CD4-positive, alpha-beta memory T cell (primary cell): ENCODE measurements at regions of chr2 and their contacts with region 1.

Region 1: DNA sequence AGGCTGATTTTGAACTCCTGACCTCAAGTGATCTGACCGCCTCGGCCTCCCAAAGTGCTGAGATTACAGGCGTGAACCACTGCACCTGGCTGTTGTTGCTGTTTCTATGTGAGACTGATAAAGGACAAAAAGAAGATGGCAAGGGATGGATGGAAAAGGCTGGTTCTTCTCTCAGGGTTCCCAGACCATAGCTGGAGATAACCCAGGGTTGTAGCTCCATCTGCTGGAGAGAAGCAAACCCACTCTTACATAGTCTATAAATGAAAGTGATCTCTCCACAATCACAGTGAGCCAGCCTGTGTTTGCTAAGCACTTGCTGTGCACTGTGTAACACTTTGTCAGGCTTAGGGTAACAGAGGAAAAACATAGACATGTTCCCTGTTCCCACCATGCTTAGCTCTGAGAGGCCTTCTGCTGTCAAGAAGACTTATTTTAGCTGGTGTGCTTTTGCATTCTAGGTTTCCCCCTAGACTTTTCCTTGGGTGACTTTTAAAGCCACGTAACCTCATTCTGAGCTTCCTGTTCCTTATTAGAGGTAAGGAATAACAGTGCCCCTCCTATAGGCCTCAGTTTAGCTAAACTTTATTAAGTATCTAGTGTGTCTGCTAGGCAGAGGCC is 49.7 kb downstream of the LIMS1 start:
- DNase-seq: peak; percentile 52 to 59 (median 55)
- H3K4me3 ChIP-seq: no peak overlapping the region
- H3K4me3 Mint-ChIP-seq: no peak overlapping the region
- H3K27ac ChIP-seq: no peak overlapping the region
- H3K27ac Mint-ChIP-seq: peak overlapping the region in 2 of 7 donors; percentile 30 to 52
- H3K4me1 ChIP-seq: peaks cover 16% of the 10 kb centered on the region
- H3K4me1 Mint-ChIP-seq: peaks cover 16 to 31% (median 17%) of the 10 kb centered on the region in 4 donors
- H3K27me3 ChIP-seq: no peaks in the 10 kb centered on the region
- H3K27me3 Mint-ChIP-seq: no peaks in the 10 kb centered on the region

Region 2: GRCh38 chr2:108377815-108378630 is 206.0 kb before region 1 on chr2 and contains the start of gene SULT1C4:
- CTCF ChIA-PET with region 1: no interaction called
- POLR2A ChIA-PET with region 1: no interaction called
- intact Hi-C with region 1: no loop called
- DNase-seq: no peak
- H3K4me3 ChIP-seq: no peak within 1 kb of the TSS
- H3K4me3 Mint-ChIP-seq: no peak within 1 kb of the TSS
- H3K27ac ChIP-seq: no peak within 1 kb of the TSS
- H3K27ac Mint-ChIP-seq: no peak within 1 kb of the TSS
- H3K4me1 ChIP-seq: no peaks in the 10 kb centered on the region
- H3K4me1 Mint-ChIP-seq: no peaks in the 10 kb centered on the region
- H3K27me3 ChIP-seq: no peaks in the 10 kb centered on the region
- H3K27me3 Mint-ChIP-seq: peaks cover 7 to 8% of the 10 kb centered on the region in 2 donors
- total RNA-seq, gene SULT1C4: not detected

Region 3: DNA sequence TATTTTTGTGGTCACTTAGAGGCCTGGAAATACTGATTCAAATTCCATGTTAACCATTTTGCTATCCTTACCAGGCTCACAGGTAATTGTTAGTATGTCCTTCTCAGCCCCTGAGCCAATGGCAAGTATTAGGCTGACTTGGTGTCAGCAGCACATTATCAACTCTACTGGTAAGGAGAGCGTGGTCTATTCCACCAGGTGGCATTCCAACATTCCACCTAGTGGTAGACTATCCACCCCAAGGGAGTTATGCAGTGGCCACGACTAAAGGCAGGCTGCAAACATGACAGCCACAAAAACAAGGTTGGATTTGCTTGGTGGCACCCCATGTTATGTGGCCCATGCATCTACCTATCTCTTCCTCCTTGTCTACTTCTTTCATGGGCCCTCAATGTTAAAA is 166.8 kb before region 1 on chr2:
- CTCF ChIA-PET with region 1: interaction called, 7 read pairs
- POLR2A ChIA-PET with region 1: no interaction called
- intact Hi-C with region 1: loop called (anchors 1 kb)
- DNase-seq: no peak
- H3K4me3 ChIP-seq: no peak overlapping the region
- H3K4me3 Mint-ChIP-seq: no peak overlapping the region
- H3K27ac ChIP-seq: no peak overlapping the region
- H3K27ac Mint-ChIP-seq: no peak overlapping the region
- H3K4me1 ChIP-seq: no peaks in the 10 kb centered on the region
- H3K4me1 Mint-ChIP-seq: no peaks in the 10 kb centered on the region
- H3K27me3 ChIP-seq: no peaks in the 10 kb centered on the region
- H3K27me3 Mint-ChIP-seq: peaks cover 0 to 7% of the 10 kb centered on the region in 2 donors

Region 4: GRCh38 chr2:108485253-108485652 is 98.8 kb before region 1 on chr2:
- CTCF ChIA-PET with region 1: no interaction called
- POLR2A ChIA-PET with region 1: no interaction called
- intact Hi-C with region 1: loop called (anchors 10 kb)
- DNase-seq: no peak
- H3K4me3 ChIP-seq: no peak overlapping the region
- H3K4me3 Mint-ChIP-seq: no peak overlapping the region
- H3K27ac ChIP-seq: no peak overlapping the region
- H3K27ac Mint-ChIP-seq: no peak overlapping the region
- H3K4me1 ChIP-seq: no peaks in the 10 kb centered on the region
- H3K4me1 Mint-ChIP-seq: peaks cover 0 to 4% (median 1%) of the 10 kb centered on the region in 4 donors
- H3K27me3 ChIP-seq: no peaks in the 10 kb centered on the region
- H3K27me3 Mint-ChIP-seq: no peaks in the 10 kb centered on the region

Region 5: GRCh38 chr2:108533832-108534583 is 50.0 kb before region 1 on chr2 and contains the start of gene LIMS1:
- CTCF ChIA-PET with region 1: interaction called, 6 read pairs
- POLR2A ChIA-PET with region 1: no interaction called
- intact Hi-C with region 1: loop called (anchors 10 kb)
- DNase-seq: peak; percentile 75 to 87 (median 81)
- H3K4me3 ChIP-seq: peak within 1 kb of the TSS; percentile 34 to 92
- H3K4me3 Mint-ChIP-seq: peak within 1 kb of the TSS; percentile 92 to 96 (median 94)
- H3K27ac ChIP-seq: peak within 1 kb of the TSS; percentile 67
- H3K27ac Mint-ChIP-seq: peak within 1 kb of the TSS; percentile 79 to 93 (median 90)
- H3K4me1 ChIP-seq: peaks cover 28% of the 10 kb centered on the region
- H3K4me1 Mint-ChIP-seq: peaks cover 19 to 33% (median 25%) of the 10 kb centered on the region in 4 donors
- H3K27me3 ChIP-seq: no peaks in the 10 kb centered on the region
- H3K27me3 Mint-ChIP-seq: no peaks in the 10 kb centered on the region
- total RNA-seq, gene LIMS1: 126 to 130 TPM

Region 6: GRCh38 chr2:108594132-108594981 is 10.3 kb after region 1 on chr2:
- CTCF ChIA-PET with region 1: interaction called, 12 read pairs
- POLR2A ChIA-PET with region 1: no interaction called
- intact Hi-C with region 1: no loop called
- DNase-seq: no peak
- H3K4me3 ChIP-seq: no peak overlapping the region
- H3K4me3 Mint-ChIP-seq: no peak overlapping the region
- H3K27ac ChIP-seq: no peak overlapping the region
- H3K27ac Mint-ChIP-seq: peak overlapping the region in 3 of 7 donors; percentile 26 to 58 (median 38)
- H3K4me1 ChIP-seq: peaks cover 17% of the 10 kb centered on the region
- H3K4me1 Mint-ChIP-seq: peaks cover 15 to 28% (median 18%) of the 10 kb centered on the region in 4 donors
- H3K27me3 ChIP-seq: no peaks in the 10 kb centered on the region
- H3K27me3 Mint-ChIP-seq: no peaks in the 10 kb centered on the region

Region 7: DNA sequence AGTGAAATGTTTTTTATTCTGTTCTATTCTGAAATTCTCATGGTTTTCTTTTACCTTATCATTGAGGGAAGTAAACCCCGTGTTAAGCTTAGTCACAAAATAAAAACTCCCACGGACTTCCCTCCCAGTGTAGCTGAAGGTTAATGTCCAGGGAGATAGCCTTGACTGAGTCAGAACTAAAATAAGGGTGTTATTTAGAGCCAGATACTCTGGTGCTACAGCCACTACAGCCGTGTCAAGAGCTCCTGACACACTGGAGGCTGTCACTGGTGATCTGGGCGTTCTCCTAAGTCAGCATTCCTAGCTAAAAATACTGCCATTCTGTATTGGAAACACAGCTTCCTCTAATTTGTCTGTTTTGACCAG is 53.3 kb after region 1 on chr2:
- CTCF ChIA-PET with region 1: interaction called, 10 read pairs
- POLR2A ChIA-PET with region 1: no interaction called
- intact Hi-C with region 1: no loop called
- DNase-seq: no peak
- H3K4me3 ChIP-seq: no peak overlapping the region
- H3K4me3 Mint-ChIP-seq: no peak overlapping the region
- H3K27ac ChIP-seq: no peak overlapping the region
- H3K27ac Mint-ChIP-seq: peak overlapping the region in 1 of 7 donors; percentile 48
- H3K4me1 ChIP-seq: peaks cover 78% of the 10 kb centered on the region
- H3K4me1 Mint-ChIP-seq: peaks cover 55 to 86% (median 66%) of the 10 kb centered on the region in 4 donors
- H3K27me3 ChIP-seq: no peaks in the 10 kb centered on the region
- H3K27me3 Mint-ChIP-seq: no peaks in the 10 kb centered on the region